ENCODE measurements at regions of chr5 and their contacts with region 1.

Region 1: GRCh38 chr5:126370796-126371718 is 52.2 kb upstream of the GRAMD2B start:
- DNase-seq: peak; percentile 72
- H3K4me3 ChIP-seq: no peak overlapping the region
- H3K27ac ChIP-seq: peak overlapping the region; percentile 46
- H3K4me1 ChIP-seq: peaks cover 51% of the 10 kb centered on the region
- H3K27me3 ChIP-seq: no peaks in the 10 kb centered on the region
- CTCF ChIP-seq: peak in 1 of 2 donors; percentile 16

Region 2: DNA sequence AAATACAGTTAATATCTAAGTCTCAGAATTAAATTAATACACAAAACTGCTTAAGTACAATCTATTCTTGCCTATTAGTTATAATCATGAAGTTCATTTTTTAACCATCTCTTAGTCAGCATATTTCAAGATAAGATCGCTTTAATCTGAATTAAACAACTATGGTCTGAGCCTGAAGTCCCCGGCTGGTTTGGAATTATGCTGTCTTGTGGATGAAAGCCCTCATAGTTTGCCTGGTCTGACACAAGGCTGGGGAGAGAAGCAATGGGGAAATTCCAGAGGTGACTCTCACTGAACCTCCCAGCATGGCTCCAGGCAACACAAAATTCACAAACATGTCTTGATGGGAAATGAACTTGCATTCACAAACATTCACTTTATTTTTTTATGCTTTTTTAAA is 24.1 kb after region 1 on chr5:
- CTCF ChIA-PET with region 1: no interaction called
- dilution Hi-C with region 1: no loop called
- in situ Hi-C with region 1: no loop called
- intact Hi-C with region 1: loop called (anchors 2 kb)
- DNase-seq: peak; percentile 90
- H3K4me3 ChIP-seq: peak overlapping the region in 1 of 3 experiments; percentile 11
- H3K27ac ChIP-seq: peak overlapping the region; percentile 92
- H3K4me1 ChIP-seq: peaks cover 20% of the 10 kb centered on the region
- H3K27me3 ChIP-seq: no peaks in the 10 kb centered on the region
- CTCF ChIP-seq: no peak

Region 3: DNA sequence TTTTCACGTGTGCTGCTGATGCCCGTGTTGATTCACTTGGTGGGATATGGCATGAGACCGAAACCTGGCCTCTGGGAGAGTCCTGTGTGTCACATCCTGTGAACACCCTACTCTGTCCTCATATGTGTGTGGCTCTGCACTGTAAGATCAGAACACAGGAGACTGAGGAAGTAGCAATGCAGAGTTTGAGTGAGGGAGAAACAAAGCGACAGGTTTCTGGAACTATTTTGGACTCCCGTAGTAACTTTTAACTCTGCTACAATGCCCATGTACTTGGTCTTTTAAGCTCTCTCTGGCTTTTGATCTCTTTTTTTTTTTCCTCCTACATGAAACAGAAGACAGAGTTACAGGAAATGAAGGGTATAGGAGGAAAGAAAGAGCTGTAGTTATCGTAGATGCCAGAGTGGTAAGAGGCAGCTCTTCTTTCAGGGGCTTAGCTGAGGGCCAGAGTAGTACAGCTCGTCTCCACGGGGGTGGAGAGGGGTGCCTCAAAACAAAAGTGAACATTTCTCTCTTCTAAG is 78.8 kb after region 1 on chr5:
- CTCF ChIA-PET with region 1: no interaction called
- dilution Hi-C with region 1: no loop called
- in situ Hi-C with region 1: loop called in 1 of 2 experiments (anchors 25 kb)
- intact Hi-C with region 1: loop called (anchors 1 kb)
- DNase-seq: peak; percentile 98
- H3K4me3 ChIP-seq: peak overlapping the region in 2 of 3 experiments; percentile 8 to 12
- H3K27ac ChIP-seq: peak overlapping the region; percentile 99
- H3K4me1 ChIP-seq: peaks cover 68% of the 10 kb centered on the region
- H3K27me3 ChIP-seq: no peaks in the 10 kb centered on the region
- CTCF ChIP-seq: no peak

Region 4: GRCh38 chr5:126676195-126676624 is 305.2 kb after region 1 on chr5:
- CTCF ChIA-PET with region 1: no interaction called
- dilution Hi-C with region 1: no loop called
- in situ Hi-C with region 1: no loop called
- intact Hi-C with region 1: no loop called
- DNase-seq: peak; percentile 57
- H3K4me3 ChIP-seq: no peak overlapping the region
- H3K27ac ChIP-seq: no peak overlapping the region
- H3K4me1 ChIP-seq: no peaks in the 10 kb centered on the region
- H3K27me3 ChIP-seq: no peaks in the 10 kb centered on the region
- CTCF ChIP-seq: peak; percentile 74 to 84